ENCODE measurements at regions of chr12 and their contacts with region 1.

Region 1: DNA sequence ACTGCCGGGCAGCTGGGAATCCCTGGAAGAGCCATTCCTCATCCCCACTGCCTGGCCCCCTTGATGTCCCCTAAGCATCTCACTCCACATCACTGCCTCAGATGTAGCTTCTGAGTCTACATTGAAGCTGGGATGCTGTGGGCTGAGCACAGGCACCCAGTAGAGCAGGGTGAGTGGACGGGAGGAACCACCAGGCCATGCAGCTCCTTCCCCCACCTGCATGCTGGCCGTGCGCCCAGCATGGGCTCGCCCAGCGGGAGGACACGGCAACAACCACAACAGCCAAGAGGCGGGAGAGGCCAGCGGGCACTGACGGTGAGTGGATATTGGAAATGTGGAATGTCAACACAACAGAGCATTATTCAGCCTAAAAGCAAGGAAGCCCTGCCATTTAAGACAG is 310.9 kb downstream of the ADGRD1 start:
- DNase-seq: no peak
- H3K4me3 ChIP-seq: no peak overlapping the region
- H3K27ac ChIP-seq: no peak overlapping the region
- H3K27me3 ChIP-seq: no peaks in the 10 kb centered on the region
- CTCF ChIP-seq: no peak

Region 2: GRCh38 chr12:130526813-130527212 is 737.8 kb before region 1 on chr12:
- intact Hi-C with region 1: no loop called
- DNase-seq: no peak
- H3K4me3 ChIP-seq: no peak overlapping the region
- H3K27ac ChIP-seq: no peak overlapping the region
- H3K27me3 ChIP-seq: peaks cover 0 to 9% (median 0%) of the 10 kb centered on the region in 45 donors
- CTCF ChIP-seq: no peak

Region 3: GRCh38 chr12:131074221-131075083 is 190.2 kb before region 1 on chr12:
- intact Hi-C with region 1: no loop called
- DNase-seq: peak in 2 of 10 donors; percentile 20 to 21
- H3K4me3 ChIP-seq: no peak overlapping the region
- H3K27ac ChIP-seq: no peak overlapping the region
- H3K27me3 ChIP-seq: peaks cover 0 to 5% (median 0%) of the 10 kb centered on the region in 45 donors
- CTCF ChIP-seq: no peak

Region 4: DNA sequence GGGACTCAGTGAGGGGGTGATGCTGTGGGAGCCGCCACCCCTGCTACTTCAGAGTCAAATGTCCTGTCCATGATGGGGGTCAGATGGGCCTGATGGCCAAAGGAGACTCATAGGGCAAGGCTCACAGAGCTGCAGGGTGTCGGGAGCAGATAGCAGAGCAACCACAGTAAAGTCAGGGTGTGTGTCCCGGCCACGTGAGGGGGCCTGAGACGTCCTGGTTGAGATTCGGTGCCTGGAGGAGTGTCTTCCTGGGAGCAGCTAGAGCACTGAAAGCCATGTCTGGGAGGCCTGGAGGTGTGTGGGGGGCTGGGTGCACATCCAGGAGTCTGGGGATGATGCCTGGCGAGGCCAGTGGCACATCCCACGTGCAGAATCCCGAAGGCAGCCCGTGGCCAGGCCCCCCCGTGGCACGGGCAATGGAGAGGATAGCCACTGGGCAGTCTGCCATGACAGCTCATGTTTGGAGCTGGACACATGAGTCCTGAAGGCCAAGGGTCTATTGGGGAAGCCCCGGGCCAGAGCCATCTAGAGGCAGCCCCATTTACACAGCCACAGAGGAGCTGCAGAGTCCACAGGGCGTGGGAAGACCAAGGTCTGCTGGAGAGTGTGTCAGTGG is 138.3 kb after region 1 on chr12:
- intact Hi-C with region 1: loop called in 1 of 2 experiments (anchors 10 kb)
- DNase-seq: no peak
- H3K4me3 ChIP-seq: no peak overlapping the region
- H3K27ac ChIP-seq: no peak overlapping the region
- H3K27me3 ChIP-seq: peaks cover 0 to 7% (median 0%) of the 10 kb centered on the region in 45 donors
- CTCF ChIP-seq: no peak